ENCODE measurements at regions of chr12 and their contacts with region 1.

Region 1: GRCh38 chr12:70733385-70733784 is 96.2 kb upstream of the PTPRB start:
- DNase-seq: no peak
- H3K4me3 ChIP-seq: no peak overlapping the region
- CTCF ChIP-seq: no peak
- POLR2A ChIP-seq: no peak

Region 2: DNA sequence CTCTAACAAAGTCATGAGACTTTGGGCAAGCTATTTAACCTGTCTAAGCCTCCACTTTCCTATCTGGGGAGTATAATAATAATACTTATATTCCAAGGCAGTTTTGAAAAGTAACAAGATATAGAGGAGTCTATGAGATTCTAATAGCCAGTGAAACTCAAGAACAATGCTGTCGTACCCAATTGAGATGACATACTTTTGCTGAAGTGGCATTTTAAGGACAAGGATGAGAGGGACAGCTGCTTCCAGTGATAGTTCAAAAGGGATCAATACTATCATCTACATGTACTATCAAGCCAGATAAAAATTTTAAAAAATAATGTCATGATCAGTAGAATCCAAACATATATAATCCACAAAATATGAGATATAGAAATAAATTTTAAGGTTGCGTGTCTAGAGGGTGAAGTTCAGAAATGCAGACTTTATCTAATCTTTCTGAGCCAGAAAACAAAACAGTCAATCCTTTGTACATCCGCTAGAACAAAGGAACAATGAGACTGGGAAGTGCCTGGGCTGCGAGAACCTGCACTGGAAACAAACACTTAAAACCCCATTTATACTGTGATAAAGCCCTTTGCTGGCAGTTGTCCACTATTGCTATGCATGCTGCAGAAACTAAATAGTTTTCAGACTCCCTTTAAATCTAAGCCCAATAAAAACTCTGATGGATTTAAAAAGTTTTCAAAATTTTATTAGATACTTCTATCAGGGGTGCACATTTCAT is 134.8 kb before region 1 on chr12:
- intact Hi-C with region 1: no loop called
- DNase-seq: no peak
- H3K4me3 ChIP-seq: no peak overlapping the region
- CTCF ChIP-seq: no peak
- POLR2A ChIP-seq: no peak

Region 3: GRCh38 chr12:70671698-70672097 is 61.7 kb before region 1 on chr12:
- intact Hi-C with region 1: no loop called
- DNase-seq: no peak
- H3K4me3 ChIP-seq: no peak overlapping the region
- CTCF ChIP-seq: no peak
- POLR2A ChIP-seq: no peak

Region 4: DNA sequence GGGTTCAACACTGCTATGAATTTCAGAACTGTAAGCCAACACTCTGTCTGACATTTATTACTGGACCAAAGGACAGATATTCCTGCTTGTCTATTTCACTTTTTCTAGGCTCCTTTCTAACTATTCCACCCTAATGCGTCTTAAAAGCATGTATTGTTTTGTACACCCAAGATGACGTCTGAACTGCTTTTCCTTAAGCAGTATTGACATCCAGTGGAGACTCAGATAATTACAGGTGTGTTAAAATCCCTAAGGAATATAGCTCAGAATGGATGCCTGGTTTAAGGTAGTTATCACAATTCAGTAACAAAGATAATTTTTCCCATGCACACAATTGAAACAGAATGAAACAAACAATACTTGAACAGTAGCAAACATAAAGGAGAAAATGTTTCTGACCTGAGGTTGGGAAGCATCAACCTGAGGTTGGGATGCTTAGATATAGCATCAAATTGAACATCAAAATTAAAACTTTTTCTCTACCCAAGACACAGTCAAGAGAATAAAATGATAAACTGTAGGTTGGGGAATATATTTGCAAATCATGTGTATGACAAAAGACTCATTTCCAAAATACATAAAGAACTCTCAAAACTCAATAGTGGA is 280.9 kb after region 1 on chr12:
- intact Hi-C with region 1: loop called (anchors 10 kb)
- DNase-seq: no peak
- H3K4me3 ChIP-seq: no peak overlapping the region
- CTCF ChIP-seq: no peak
- POLR2A ChIP-seq: no peak

Region 5: DNA sequence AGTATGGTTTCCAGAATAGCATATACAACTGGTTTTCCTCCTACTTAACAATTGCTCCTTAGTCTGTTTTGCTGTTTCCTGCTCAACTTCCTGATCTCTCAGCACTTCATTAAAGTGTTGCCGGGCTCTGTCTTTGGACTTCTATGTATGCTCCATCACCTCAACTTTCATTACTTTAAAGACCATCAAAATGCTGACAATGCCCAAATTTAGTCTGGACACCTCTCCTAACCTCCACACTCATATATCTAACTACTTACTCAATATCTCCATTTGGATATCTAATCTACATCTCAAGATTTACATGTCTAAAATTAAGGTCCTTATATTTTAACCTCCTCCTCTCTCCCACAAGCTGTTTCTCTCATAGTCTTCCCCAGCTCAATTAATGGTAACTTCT is 651.8 kb after region 1 on chr12:
- intact Hi-C with region 1: loop called (anchors 5 kb)
- DNase-seq: no peak
- H3K4me3 ChIP-seq: no peak overlapping the region
- CTCF ChIP-seq: no peak
- POLR2A ChIP-seq: no peak